Lower leg skin (tissue), 4 donors: ENCODE measurements at regions of chrX and their contacts with region 1.

Region 1: DNA sequence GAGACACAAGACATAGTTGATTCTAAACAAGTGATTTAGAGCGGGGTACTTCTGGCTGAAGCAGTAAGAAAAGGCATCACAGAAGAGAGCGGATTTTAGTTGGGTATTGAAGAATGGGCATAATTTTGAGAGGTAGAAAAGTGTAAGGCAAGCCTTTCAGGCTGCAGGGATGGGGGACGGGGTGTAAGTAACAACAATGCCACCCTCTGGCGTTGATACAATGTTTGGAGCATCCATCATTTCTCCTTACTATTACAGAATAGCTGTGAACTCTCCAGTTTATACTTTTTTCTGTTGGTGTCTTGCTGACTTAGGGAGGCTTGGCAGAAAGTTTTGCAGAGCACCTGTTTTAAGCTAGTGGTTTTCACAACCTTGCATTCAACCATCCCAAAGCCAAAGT is 78.5 kb upstream of the PRR32 start:
- DNase-seq: no peak
- H3K4me3 ChIP-seq: no peak overlapping the region
- CTCF ChIP-seq: no peak
- POLR2A ChIP-seq: no peak

Region 2: GRCh38 chrX:124910611-124911010 is 1830.5 kb before region 1 on chrX:
- intact Hi-C with region 1: loop called (anchors 5 kb)
- DNase-seq: no peak
- H3K4me3 ChIP-seq: no peak overlapping the region
- CTCF ChIP-seq: no peak
- POLR2A ChIP-seq: no peak

Region 3: GRCh38 chrX:125681507-125681906 is 1059.6 kb before region 1 on chrX:
- intact Hi-C with region 1: no loop called
- DNase-seq: no peak
- H3K4me3 ChIP-seq: no peak overlapping the region
- CTCF ChIP-seq: no peak
- POLR2A ChIP-seq: no peak

Region 4: DNA sequence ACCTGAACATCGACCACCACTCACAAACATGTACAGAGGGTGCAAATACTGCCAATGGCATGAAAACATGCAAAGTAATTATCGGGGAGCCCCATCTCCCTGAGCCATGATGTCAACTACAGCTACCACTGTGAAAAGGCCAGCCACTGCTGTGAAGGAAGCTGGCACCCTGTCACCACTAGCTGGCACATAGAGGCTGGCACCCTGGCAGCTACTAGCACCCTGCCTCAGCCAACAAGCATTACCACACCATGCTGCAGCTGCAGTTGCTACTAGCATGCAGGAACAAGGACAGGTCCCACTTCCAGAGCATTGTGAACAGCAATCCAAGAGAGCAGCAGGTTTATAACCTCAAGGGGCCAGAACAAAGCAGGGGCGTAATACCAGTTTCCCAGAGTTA is 159.9 kb after region 1 on chrX:
- intact Hi-C with region 1: no loop called
- DNase-seq: no peak
- H3K4me3 ChIP-seq: no peak overlapping the region
- CTCF ChIP-seq: no peak
- POLR2A ChIP-seq: no peak